CD14-positive monocyte (primary cell): ENCODE measurements at regions of chr2 and their contacts with region 1.

Region 1: GRCh38 chr2:151409601-151410484 is at the start of gene RIF1:
- DNase-seq: peak; percentile 55 to 67 (median 65)
- H3K4me3 ChIP-seq: peak within 1 kb of the TSS; percentile 68 to 96 (median 91)
- H3K4me3 Mint-ChIP-seq: peak within 1 kb of the TSS; percentile 99
- H3K27ac ChIP-seq: peak within 1 kb of the TSS; percentile 89
- H3K27ac Mint-ChIP-seq: peak within 1 kb of the TSS; percentile 92 to 97 (median 95)
- H3K4me1 ChIP-seq: peaks cover 9 to 21% of the 10 kb centered on the region in 2 donors
- H3K4me1 Mint-ChIP-seq: peaks cover 18% of the 10 kb centered on the region
- H3K27me3 ChIP-seq: no peaks in the 10 kb centered on the region
- H3K27me3 Mint-ChIP-seq: peaks cover 0 to 4% (median 0%) of the 10 kb centered on the region in 3 donors
- CTCF ChIP-seq: peak; percentile 73
- polyA plus RNA-seq, gene RIF1: 3.8 to 9.3 (median 6.5) TPM

Region 2: DNA sequence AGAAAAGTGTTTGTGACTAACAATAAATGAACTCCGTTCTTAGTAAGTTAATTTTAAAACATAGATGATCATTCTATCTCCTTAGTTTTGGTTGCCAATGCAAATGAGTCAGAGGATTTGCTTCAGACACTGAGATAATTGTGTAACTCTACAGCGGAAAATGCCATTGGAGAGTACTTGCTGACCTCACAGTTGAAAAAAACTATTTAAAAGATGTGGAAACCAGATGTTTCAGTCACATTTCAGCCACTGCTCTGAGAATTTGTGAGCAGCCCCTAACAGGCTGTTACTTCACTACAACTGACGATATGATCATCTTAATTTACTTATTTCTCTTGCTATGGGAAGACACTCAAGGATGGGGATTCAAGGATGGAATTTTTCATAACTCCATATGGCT is 52.5 kb before region 1 on chr2 and contains the start of gene TNFAIP6:
- intact Hi-C with region 1: loop called in 1 of 2 experiments (anchors 10 kb)
- DNase-seq: peak; percentile 88 to 96 (median 95)
- H3K4me3 ChIP-seq: peak within 1 kb of the TSS in 2 of 3 experiments; percentile 19 to 57
- H3K4me3 Mint-ChIP-seq: peak within 1 kb of the TSS in 1 of 2 donors; percentile 57
- H3K27ac ChIP-seq: peak within 1 kb of the TSS in 1 of 2 donors; percentile 79
- H3K27ac Mint-ChIP-seq: peak within 1 kb of the TSS; percentile 82 to 94 (median 91)
- H3K4me1 ChIP-seq: peaks cover 9 to 30% of the 10 kb centered on the region in 2 donors
- H3K4me1 Mint-ChIP-seq: peaks cover 17% of the 10 kb centered on the region
- H3K27me3 ChIP-seq: no peaks in the 10 kb centered on the region
- H3K27me3 Mint-ChIP-seq: no peaks in the 10 kb centered on the region
- CTCF ChIP-seq: no peak
- polyA plus RNA-seq, gene TNFAIP6: 2.6 to 8.2 (median 3.5) TPM

Region 3: DNA sequence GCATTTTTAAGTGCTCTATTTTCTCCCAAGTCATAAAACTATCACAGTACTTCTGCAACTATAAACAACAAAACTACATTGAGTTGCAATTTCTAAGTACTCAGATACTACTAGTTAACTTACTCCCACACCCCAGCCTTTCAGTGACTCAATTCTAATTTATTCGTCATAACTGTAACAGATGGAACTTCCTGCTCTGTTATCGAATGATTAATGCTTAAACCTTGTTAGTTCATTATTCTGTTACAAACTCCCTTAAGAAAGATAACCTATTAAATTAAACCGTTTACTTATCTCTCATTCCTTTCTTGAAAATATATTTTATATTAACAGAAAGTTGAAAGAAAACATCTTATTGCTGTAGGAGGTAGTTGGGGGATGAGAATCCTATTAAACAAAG is 35.4 kb before region 1 on chr2:
- intact Hi-C with region 1: loop called in 1 of 2 experiments (anchors 5 kb)
- DNase-seq: peak in 1 of 3 donors; percentile 57
- H3K4me3 ChIP-seq: no peak overlapping the region
- H3K4me3 Mint-ChIP-seq: no peak overlapping the region
- H3K27ac ChIP-seq: no peak overlapping the region
- H3K27ac Mint-ChIP-seq: no peak overlapping the region
- H3K4me1 ChIP-seq: no peaks in the 10 kb centered on the region
- H3K4me1 Mint-ChIP-seq: no peaks in the 10 kb centered on the region
- H3K27me3 ChIP-seq: no peaks in the 10 kb centered on the region
- H3K27me3 Mint-ChIP-seq: peaks cover 0 to 5% (median 0%) of the 10 kb centered on the region in 3 donors
- CTCF ChIP-seq: no peak